ENCODE measurements at regions of chrX and their contacts with region 1.

Region 1: DNA sequence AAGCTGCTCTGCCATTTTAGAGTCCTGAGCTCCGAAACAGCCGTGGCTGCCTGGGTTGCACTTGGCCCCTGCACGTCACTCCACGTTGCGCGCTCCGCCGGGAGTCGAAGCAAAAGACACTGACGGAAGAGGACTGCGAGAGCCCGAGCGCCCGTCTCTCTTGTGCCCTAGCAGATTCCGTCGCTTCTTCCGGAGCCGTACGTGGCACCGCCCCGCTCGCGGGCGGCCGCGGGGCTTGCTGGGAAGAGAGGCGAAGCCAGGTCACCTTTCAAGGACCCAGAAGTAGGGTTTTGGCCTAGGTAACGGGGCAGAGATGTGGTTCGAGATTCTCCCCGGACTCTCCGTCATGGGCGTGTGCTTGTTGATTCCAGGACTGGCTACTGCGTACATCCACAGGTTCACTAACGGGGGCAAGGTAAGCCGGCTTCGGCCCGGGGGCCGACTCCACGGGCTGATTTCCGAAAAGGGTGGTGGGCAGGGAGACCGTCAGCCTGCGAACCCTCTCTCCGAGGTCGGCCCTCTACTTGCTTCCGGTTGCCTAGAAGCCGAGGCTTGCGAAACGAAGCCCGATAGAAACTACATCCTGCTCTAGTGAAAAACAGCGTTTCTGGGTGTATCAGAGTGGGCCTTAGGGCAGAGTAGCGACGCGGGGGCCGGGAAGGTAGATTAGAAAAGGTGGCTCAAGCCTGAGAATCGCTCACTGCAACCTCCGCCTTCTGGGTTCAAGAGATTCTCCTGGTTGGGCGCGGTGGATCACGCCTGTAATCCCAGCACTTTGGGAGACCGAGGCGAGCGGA is at the starts of genes NDUFA1 and RNF113A:
- DNase-seq: peak; percentile 92
- H3K4me3 ChIP-seq: peak within 1 kb of the TSS; percentile 38 to 65 (median 61)
- H3K27ac ChIP-seq: peak within 1 kb of the TSS; percentile 91 to 96 (median 94)
- H3K4me1 ChIP-seq: peaks cover 0 to 17% (median 7%) of the 10 kb centered on the region in 4 donors
- H3K27me3 ChIP-seq: no peaks in the 10 kb centered on the region
- CTCF ChIP-seq: no peak
- EP300 ChIP-seq: peak in 1 of 4 donors; percentile 34
- POLR2A ChIP-seq: peak; percentile 67 to 76
- total RNA-seq, gene NDUFA1: 51.2 to 106 (median 76.3) TPM
- total RNA-seq, gene RNF113A: 7.2 to 15.6 (median 9.6) TPM

Region 2: DNA sequence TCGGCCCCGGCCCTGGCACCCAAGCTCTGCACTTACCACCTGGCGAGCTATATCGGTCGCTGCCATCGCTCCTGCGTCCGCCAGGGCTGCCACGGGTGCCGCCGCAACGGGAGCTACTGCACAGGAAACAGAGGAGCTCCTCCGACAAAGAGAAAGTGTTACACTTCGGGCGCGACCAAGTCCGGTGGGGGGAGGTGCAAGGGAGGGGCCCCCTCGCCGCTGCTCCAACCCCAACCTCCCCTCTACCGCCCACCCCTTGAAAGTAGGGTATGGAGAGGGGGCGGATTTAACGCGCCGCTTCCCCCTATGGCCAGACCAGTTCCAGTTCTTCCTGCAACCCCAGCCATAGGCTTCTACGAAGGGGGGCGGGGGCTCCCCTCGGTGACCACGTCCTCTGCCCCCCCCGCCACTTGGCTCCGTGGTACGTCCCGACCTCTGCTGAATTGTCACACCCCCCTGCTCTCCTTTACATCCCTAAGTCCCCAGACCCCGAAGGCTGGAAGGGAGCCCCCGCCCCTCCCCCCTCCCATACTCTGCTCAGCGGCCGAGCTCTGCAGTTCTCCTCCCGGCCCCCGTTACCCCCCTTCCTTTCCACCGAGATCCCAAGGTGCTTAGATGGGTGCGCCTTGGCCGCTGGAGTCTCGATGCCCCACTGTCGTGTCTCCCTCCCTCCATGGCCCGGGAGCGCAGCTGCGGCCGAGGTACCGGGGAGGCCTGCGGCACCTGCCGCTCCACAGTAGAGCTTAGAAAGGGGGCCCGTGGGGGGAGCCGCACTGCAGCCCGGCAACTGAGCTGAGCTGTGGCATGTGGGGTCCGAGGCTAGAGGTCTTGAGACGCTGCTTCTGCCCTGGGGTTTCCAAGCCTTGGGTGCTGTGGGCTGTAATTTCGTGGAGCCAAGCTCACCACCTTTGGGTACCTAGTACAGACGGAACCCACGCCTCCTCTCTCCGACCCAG is 178.5 kb before region 1 on chrX and contains the start of gene SEPTIN6:
- intact Hi-C with region 1: loop called (anchors 10 kb)
- DNase-seq: peak; percentile 83
- H3K4me3 ChIP-seq: peak within 1 kb of the TSS; percentile 69 to 80 (median 78)
- H3K27ac ChIP-seq: peak within 1 kb of the TSS; percentile 86 to 93 (median 91)
- H3K4me1 ChIP-seq: peaks cover 0 to 20% (median 11%) of the 10 kb centered on the region in 4 donors
- H3K27me3 ChIP-seq: peaks cover 0 to 2% (median 0%) of the 10 kb centered on the region in 3 donors
- CTCF ChIP-seq: no peak
- EP300 ChIP-seq: peak in 1 of 4 donors; percentile 5
- POLR2A ChIP-seq: peak; percentile 41 to 76
- total RNA-seq, gene SEPTIN6: 48.2 to 103 (median 69.4) TPM

Region 3: GRCh38 chrX:119852382-119853353 is 19.1 kb before region 1 on chrX and contains the start of gene UPF3B:
- intact Hi-C with region 1: loop called (anchors 2 kb)
- DNase-seq: peak; percentile 99
- H3K4me3 ChIP-seq: peak within 1 kb of the TSS; percentile 54 to 69 (median 64)
- H3K27ac ChIP-seq: peak within 1 kb of the TSS; percentile 86 to 92 (median 86)
- H3K4me1 ChIP-seq: peaks cover 0 to 7% (median 5%) of the 10 kb centered on the region in 4 donors
- H3K27me3 ChIP-seq: no peaks in the 10 kb centered on the region
- CTCF ChIP-seq: no peak
- EP300 ChIP-seq: no peak
- POLR2A ChIP-seq: peak; percentile 33 to 42
- total RNA-seq, gene UPF3B: 6.5 to 11.4 (median 9.2) TPM

Measured in sigmoid colon (tissue), 7 donors.